ENCODE measurements at regions of chr10 and their contacts with region 1.

Region 1: DNA sequence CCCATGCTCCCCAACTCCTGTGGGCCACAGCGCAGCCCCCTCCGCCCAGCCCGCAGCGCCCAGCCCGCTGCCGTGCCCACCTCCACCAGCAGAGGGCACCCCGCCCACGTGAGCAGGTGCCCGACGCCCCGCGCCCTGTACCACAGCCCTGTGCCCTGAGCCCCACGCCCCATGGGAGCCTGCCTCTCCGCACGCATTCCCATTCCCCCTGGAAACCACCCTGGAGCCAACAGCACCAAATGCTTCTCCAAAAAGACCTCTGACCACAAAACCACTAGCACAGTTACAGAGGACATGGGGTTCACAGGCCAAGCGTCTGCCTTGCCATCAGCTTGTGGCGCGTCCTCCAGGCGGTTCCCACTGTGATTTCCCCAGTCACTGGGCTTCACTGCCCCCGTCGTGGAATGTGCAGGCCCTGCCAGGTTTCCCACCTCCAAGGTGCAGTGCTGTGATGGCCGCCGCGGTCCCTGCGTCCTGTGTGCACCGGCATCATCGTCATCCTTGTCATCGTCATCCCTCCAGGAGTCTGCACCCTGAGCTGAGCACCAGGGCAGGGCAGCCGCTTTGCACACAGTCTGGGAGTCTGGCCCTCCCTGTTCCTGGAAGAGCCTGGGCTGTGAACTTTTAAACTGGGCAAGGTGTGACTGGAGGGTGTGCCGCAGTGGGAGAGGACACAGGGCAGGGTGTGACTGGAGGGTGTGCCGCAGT is 61.7 kb downstream of the PWWP2B start:
- DNase-seq: peak in 1 of 2 donors; percentile 73
- H3K4me3 ChIP-seq: no peak overlapping the region
- H3K27ac ChIP-seq: no peak overlapping the region
- H3K4me1 ChIP-seq: peaks cover 8 to 23% (median 14%) of the 10 kb centered on the region in 4 donors
- H3K27me3 ChIP-seq: peaks cover 0 to 17% of the 10 kb centered on the region in 2 donors
- CTCF ChIP-seq: peak; percentile 91 to 97

Region 2: DNA sequence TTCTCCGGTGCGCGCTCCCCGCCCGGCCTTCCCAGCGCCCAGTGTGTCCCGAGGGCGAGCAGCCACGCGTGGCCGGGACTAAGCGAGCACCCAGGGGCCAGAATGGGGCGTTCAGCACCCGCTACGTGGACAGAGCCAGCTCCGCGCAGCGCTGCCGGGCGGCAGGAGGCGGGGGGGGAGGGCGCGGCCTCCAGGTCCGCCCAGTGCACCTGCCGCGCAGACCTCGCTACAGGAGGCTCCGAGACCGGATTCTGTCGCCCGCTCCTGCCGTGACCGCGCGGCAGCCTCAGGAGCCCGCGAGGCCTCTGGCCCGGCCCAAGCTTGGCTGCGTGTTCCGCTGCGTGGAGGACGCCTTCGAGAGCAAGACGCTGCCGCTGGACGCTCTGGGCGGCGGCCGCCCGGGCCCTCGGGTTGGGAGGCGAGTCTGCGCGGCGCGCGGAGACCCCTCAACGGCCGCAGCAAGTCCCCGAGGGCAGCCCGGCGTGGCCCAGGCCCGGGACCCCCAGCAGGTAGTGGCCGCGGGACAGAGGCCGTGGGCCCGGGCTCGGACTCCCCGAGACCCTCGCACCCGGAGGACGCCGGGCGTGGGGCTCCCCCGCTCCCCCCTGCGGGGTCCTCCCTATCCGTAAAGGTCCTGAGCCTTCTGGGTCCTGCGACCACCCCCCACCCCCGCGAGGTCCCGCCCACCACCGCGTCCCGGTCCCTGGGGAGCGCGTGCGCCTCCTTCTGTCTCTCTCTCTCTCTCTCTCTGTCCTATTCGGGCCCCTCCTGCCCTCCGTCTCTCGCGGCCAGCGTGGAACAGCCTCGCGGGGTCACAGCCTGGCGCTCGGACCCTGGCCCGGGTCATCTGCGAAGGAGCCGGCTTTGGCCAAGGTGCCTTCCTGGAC is 272.9 kb before region 1 on chr10:
- intact Hi-C with region 1: no loop called
- DNase-seq: no peak
- H3K4me3 ChIP-seq: peak overlapping the region; percentile 24 to 48
- H3K27ac ChIP-seq: no peak overlapping the region
- H3K4me1 ChIP-seq: peaks cover 6 to 29% (median 24%) of the 10 kb centered on the region in 4 donors
- H3K27me3 ChIP-seq: peaks cover 0 to 77% of the 10 kb centered on the region in 2 donors
- CTCF ChIP-seq: no peak

Region 3: GRCh38 chr10:132223156-132223590 is 235.6 kb before region 1 on chr10:
- intact Hi-C with region 1: loop called (anchors 5 kb)
- DNase-seq: peak; percentile 70 to 82
- H3K4me3 ChIP-seq: no peak overlapping the region
- H3K27ac ChIP-seq: no peak overlapping the region
- H3K4me1 ChIP-seq: no peaks in the 10 kb centered on the region
- H3K27me3 ChIP-seq: peaks cover 0 to 3% of the 10 kb centered on the region in 2 donors
- CTCF ChIP-seq: peak; percentile 77 to 85

Region 4: DNA sequence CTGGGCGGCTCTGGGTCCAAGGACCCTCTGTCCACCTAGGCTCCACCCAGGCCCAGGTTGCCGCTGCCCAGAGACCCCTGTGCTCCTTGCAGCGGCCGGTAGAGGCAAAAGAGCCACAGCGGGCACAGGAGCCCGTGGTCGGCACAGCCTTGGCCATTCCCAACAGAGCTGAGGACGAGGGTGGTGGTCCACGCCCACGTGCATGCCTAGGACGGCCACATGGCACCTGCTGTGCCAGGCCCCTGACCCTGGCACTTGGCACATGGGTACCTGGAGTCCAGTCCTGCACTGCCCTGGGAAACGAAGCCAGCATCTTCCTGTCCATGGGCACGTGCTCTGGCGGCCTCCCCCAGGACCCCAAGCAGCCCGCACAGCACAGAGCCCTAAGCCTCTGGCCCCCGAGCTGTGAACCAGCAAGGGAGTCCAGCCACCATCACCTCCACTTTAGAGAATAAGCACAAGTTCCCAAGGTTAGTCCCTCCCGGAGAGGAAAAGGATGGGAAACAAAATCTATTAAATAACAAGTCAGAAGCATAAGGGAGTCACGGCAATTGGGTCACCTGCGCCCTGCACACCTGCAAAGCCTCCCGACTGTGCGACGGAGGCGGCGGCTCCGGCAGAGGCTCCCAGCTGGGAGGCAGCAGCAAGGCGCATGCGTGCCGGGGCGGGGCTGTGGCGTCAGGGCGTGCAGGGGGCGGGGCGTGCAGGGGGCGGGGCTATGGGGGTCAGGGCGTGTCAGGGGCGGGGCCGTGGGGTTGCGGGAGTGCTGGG is 210.1 kb before region 1 on chr10:
- intact Hi-C with region 1: no loop called
- DNase-seq: no peak
- H3K4me3 ChIP-seq: no peak overlapping the region
- H3K27ac ChIP-seq: no peak overlapping the region
- H3K4me1 ChIP-seq: peaks cover 0 to 7% (median 0%) of the 10 kb centered on the region in 4 donors
- H3K27me3 ChIP-seq: peaks cover 0 to 49% of the 10 kb centered on the region in 2 donors
- CTCF ChIP-seq: no peak

Region 5: GRCh38 chr10:132497023-132497680 is 38.4 kb after region 1 on chr10:
- intact Hi-C with region 1: loop called (anchors 5 kb)
- DNase-seq: peak; percentile 15 to 68
- H3K4me3 ChIP-seq: no peak overlapping the region
- H3K27ac ChIP-seq: no peak overlapping the region
- H3K4me1 ChIP-seq: peaks cover 0 to 33% (median 16%) of the 10 kb centered on the region in 4 donors
- H3K27me3 ChIP-seq: peaks cover 0 to 8% of the 10 kb centered on the region in 2 donors
- CTCF ChIP-seq: no peak

Region 6: DNA sequence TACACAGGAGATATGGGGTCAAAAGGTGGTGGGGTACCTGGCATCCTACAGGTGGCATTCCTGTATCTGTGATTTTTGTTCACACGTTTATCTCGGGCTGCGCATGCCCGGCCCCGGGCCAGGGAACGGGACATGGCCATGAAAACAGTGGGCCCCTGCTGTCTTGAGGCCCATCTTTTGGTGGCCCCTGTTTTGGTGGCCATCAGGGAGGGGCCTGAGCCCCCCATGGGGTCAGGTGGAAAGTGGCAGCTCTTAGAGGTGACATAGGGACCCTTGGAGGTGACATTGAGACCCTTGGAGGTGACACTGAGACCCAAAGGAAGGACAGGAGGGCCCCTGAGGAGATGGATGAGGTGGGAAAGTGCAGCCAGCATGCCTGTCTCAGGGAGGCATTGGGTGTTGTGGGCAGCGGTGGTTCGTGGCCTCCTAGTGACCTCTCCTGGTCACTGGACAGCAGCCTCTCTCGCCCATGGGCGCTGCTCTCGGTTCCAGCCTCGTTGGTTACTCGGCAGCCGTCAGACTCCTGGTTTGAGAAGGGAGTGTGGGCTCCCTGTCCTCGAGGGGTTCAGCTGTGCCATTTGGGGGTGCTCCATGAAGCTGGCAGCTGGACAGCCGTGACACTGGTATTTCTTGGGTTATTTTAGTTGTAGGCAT is 118.7 kb after region 1 on chr10:
- intact Hi-C with region 1: loop called (anchors 1 kb)
- DNase-seq: no peak
- H3K4me3 ChIP-seq: no peak overlapping the region
- H3K27ac ChIP-seq: peak overlapping the region in 1 of 2 donors; percentile 79
- H3K4me1 ChIP-seq: peaks cover 8 to 78% (median 61%) of the 10 kb centered on the region in 4 donors
- H3K27me3 ChIP-seq: no peaks in the 10 kb centered on the region
- CTCF ChIP-seq: peak; percentile 42 to 56

Region 7: DNA sequence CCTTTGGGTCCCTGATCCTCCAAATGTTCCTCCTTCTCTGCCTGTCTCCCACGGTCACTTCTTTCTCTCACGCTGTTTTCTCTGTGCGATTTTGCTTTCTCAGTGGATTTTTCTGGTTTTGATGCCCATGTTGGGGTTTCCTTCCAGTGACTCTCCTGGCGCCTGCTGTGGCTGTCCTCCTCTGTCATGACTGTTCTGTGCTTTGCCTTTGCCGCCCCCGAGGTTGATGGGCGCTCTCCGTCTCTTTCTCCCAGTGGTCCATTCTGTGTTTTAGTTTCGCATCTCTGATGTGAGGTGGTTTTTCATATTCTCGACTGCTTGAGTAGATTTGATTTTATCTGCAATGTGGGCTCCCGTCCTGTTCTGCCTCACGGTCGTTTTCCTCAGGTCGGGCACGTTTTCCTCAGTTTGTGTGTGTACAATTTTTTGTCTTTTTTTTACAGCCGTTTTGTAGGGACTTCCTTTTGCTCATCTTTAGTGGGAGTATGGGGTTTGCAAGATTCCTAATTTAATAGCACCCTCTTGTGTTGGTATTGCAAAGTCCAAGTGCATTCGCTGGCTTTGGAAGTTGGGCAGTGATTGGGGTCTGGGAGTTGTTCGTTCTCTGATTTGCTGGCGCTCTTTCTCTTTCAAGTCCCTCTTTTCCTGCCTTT is 178.9 kb after region 1 on chr10:
- intact Hi-C with region 1: loop called (anchors 2 kb)
- DNase-seq: no peak
- H3K4me3 ChIP-seq: peak overlapping the region; percentile 0 to 1
- H3K27ac ChIP-seq: peak overlapping the region in 1 of 2 donors; percentile 41
- H3K4me1 ChIP-seq: peaks cover 0 to 69% (median 34%) of the 10 kb centered on the region in 4 donors
- H3K27me3 ChIP-seq: no peaks in the 10 kb centered on the region
- CTCF ChIP-seq: peak; percentile 72 to 76

Measured in tibial artery (tissue), 4 donors.